ENCODE measurements at regions of chr17 and their contacts with region 1.

Region 1: DNA sequence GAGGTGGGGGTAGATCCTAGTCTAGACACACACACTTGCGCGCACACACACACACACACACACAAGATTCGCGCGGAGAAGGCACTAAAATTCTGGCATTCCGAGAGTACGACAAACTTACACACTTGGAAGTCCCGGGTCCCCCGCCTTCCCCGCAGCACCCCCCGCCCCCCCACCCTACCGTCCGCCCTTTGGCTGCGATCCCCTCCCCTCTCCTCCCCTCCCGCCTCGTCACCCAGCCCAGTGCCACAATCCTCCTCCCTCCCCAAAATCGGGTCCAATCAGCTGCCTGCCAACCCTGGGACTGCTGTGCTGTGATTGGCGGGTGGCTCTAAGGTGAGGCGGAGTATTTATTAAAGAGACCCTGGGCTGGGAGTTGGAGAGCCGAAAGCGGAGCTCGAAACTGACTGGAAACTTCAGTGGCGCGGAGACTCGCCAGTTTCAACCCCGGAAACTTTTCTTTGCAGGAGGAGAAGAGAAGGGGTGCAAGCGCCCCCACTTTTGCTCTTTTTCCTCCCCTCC is at the start of gene SOX9:
- DNase-seq: peak; percentile 73
- ATAC-seq: peak; percentile 90
- H3K4me3 ChIP-seq: peak within 1 kb of the TSS; percentile 84
- H3K27ac ChIP-seq: no peak within 1 kb of the TSS; the same call in 1 of the 2 replicates
- H3K4me1 ChIP-seq: peaks cover 5% of the 10 kb centered on the region
- H3K27me3 ChIP-seq: peaks cover 9 to 17% of the 10 kb centered on the region in 2 experiments
- CTCF ChIP-seq: no peak
- EP300 ChIP-seq: no peak; a peak in 1 of 4 replicates
- POLR2A ChIP-seq: peak; percentile 63
- RAD21 ChIP-seq: 0 out of 2 replicates have a peak, but pooled peaks have one; percentile 11
- polyA plus RNA-seq, gene SOX9: 4.5 to 8.6 TPM

Region 2: GRCh38 chr17:71764505-71764904 is 356.2 kb before region 1 on chr17:
- CTCF ChIA-PET with region 1: no interaction called
- POLR2A ChIA-PET with region 1: no interaction called
- RAD21 ChIA-PET with region 1: no interaction called
- SMC1A ChIA-PET with region 1: no interaction called
- in situ Hi-C with region 1: no loop called
- intact Hi-C with region 1: loop called (anchors 5 kb)
- DNase-seq: no peak
- ATAC-seq: peak; percentile 98
- H3K4me3 ChIP-seq: no peak overlapping the region
- H3K27ac ChIP-seq: no peak overlapping the region
- H3K4me1 ChIP-seq: no peaks in the 10 kb centered on the region
- H3K27me3 ChIP-seq: no peaks in the 10 kb centered on the region
- CTCF ChIP-seq: peak; percentile 58 to 62 (median 58)
- EP300 ChIP-seq: no peak
- POLR2A ChIP-seq: no peak
- RAD21 ChIP-seq: peak; percentile 59

Region 3: GRCh38 chr17:71976011-71976649 is 144.6 kb before region 1 on chr17:
- CTCF ChIA-PET with region 1: no interaction called
- POLR2A ChIA-PET with region 1: no interaction called
- RAD21 ChIA-PET with region 1: no interaction called
- SMC1A ChIA-PET with region 1: no interaction called
- in situ Hi-C with region 1: no loop called
- intact Hi-C with region 1: no loop called
- DNase-seq: no peak
- ATAC-seq: no peak
- H3K4me3 ChIP-seq: no peak overlapping the region
- H3K27ac ChIP-seq: no peak overlapping the region
- H3K4me1 ChIP-seq: no peaks in the 10 kb centered on the region
- H3K27me3 ChIP-seq: no peaks in the 10 kb centered on the region
- CTCF ChIP-seq: no peak
- EP300 ChIP-seq: no peak
- POLR2A ChIP-seq: no peak
- RAD21 ChIP-seq: no peak

Region 4: GRCh38 chr17:72004611-72005331 is 115.9 kb before region 1 on chr17:
- CTCF ChIA-PET with region 1: interaction called, 9 read pairs
- POLR2A ChIA-PET with region 1: interaction called, 3 read pairs
- RAD21 ChIA-PET with region 1: interaction called, 42 read pairs
- SMC1A ChIA-PET with region 1: interaction called, 10 read pairs
- in situ Hi-C with region 1: no loop called
- intact Hi-C with region 1: loop called (anchors 1 kb)
- DNase-seq: peak; percentile 79
- ATAC-seq: peak; percentile 77
- H3K4me3 ChIP-seq: peak overlapping the region; percentile 35
- H3K27ac ChIP-seq: peak overlapping the region; percentile 87
- H3K4me1 ChIP-seq: peaks cover 7% of the 10 kb centered on the region; the same call in 1 of the 2 replicates
- H3K27me3 ChIP-seq: no peaks in the 10 kb centered on the region
- CTCF ChIP-seq: no peak
- EP300 ChIP-seq: peak in 1 of 2 experiments; percentile 11; a peak in 2 of 4 replicates
- POLR2A ChIP-seq: no peak
- RAD21 ChIP-seq: peak; percentile 10; the same call in 1 of the 2 replicates

Region 5: DNA sequence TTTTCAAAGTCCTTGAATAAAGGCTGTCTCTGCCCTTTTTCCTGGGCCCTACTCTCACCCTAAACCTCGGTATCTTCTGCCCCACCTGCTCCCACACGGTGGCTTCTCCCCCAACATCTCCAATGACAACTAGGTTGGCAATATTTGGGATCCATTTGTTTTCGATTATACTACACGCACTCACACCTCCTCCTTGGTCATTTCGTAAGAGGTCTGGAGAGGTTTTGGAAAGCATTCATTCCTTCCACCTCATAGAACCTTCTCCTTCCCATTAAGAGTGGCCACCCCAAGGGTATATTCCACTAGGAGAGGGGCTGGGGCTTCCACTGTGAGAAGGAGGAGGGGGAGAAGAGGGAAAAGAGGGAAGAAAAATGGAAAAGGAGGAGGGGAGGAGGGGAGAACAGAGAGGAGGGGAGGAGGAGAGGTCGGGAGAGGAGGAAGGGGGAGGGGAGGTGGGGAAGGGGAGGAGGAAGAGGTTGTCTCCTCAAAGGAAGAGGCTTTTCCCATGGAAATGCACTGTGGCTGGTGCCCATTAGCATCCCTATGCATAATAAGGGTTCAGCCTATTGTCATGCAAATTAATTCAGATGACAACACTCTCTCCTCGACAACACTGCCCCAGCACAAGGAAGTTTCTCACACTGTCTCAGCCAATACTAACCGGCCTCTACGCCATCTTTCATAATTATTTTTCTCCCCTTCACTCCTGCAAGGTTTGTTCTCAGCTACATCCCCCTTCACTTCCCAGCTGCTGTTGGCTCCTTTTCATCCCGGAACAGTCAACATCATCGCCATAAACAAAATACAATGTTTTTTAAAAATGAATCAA is 30.1 kb after region 1 on chr17:
- CTCF ChIA-PET with region 1: no interaction called
- POLR2A ChIA-PET with region 1: no interaction called
- RAD21 ChIA-PET with region 1: no interaction called
- SMC1A ChIA-PET with region 1: no interaction called
- in situ Hi-C with region 1: no loop called
- intact Hi-C with region 1: no loop called
- DNase-seq: no peak
- ATAC-seq: no peak
- H3K4me3 ChIP-seq: no peak overlapping the region
- H3K27ac ChIP-seq: no peak overlapping the region
- H3K4me1 ChIP-seq: no peaks in the 10 kb centered on the region
- H3K27me3 ChIP-seq: no peaks in the 10 kb centered on the region
- CTCF ChIP-seq: no peak
- EP300 ChIP-seq: no peak
- POLR2A ChIP-seq: no peak
- RAD21 ChIP-seq: no peak

Region 6: DNA sequence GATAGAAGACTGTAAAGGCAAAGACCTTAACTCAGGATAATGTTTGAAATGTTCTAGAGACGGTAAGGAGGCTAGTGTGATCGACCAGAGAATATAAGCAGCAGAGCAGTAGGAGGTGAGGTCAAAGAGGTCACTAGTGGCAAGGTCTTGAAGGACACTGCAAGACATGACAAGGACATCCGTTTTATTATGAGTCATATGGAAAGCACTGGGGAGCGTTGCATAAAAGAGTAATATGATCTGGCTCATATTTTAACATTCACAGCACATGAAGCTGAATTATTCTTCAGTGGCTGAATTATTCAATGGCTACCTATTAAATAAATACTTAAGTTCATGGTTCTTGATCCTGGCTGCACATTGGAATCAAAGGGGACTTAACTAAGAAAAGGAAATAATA is 123.8 kb after region 1 on chr17:
- CTCF ChIA-PET with region 1: no interaction called
- POLR2A ChIA-PET with region 1: no interaction called
- RAD21 ChIA-PET with region 1: no interaction called
- SMC1A ChIA-PET with region 1: no interaction called
- in situ Hi-C with region 1: no loop called
- intact Hi-C with region 1: no loop called
- DNase-seq: no peak
- ATAC-seq: no peak
- H3K4me3 ChIP-seq: no peak overlapping the region
- H3K27ac ChIP-seq: no peak overlapping the region
- H3K4me1 ChIP-seq: no peaks in the 10 kb centered on the region
- H3K27me3 ChIP-seq: no peaks in the 10 kb centered on the region
- CTCF ChIP-seq: no peak
- EP300 ChIP-seq: no peak
- POLR2A ChIP-seq: no peak
- RAD21 ChIP-seq: no peak

Region 7: DNA sequence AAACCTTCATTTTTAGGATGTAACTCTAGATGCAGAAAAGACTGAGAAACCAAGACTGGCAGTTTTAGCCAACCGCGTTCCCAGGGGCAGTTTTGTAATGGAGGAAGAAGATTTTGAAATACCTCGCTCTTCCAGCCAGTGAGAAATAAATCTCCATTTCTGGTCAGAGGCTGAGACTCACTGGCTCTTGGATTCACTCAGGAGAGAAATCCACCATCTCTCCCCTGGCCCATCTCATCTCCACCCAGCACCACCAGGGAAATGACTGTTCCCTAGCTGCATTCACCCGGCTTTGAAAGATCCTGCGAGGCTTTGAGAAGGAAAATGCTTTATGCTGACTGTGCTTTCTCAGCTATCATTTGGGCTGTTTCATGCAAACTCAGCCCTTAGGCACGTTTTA is 185.3 kb after region 1 on chr17:
- CTCF ChIA-PET with region 1: interaction called, 3 read pairs
- POLR2A ChIA-PET with region 1: interaction called, 3 read pairs
- RAD21 ChIA-PET with region 1: no interaction called
- SMC1A ChIA-PET with region 1: no interaction called
- in situ Hi-C with region 1: no loop called
- intact Hi-C with region 1: loop called (anchors 2 kb)
- DNase-seq: no peak
- ATAC-seq: no peak
- H3K4me3 ChIP-seq: no peak overlapping the region
- H3K27ac ChIP-seq: no peak overlapping the region
- H3K4me1 ChIP-seq: peaks cover 15% of the 10 kb centered on the region
- H3K27me3 ChIP-seq: no peaks in the 10 kb centered on the region
- CTCF ChIP-seq: no peak
- EP300 ChIP-seq: no peak
- POLR2A ChIP-seq: no peak
- RAD21 ChIP-seq: no peak

Region 8: DNA sequence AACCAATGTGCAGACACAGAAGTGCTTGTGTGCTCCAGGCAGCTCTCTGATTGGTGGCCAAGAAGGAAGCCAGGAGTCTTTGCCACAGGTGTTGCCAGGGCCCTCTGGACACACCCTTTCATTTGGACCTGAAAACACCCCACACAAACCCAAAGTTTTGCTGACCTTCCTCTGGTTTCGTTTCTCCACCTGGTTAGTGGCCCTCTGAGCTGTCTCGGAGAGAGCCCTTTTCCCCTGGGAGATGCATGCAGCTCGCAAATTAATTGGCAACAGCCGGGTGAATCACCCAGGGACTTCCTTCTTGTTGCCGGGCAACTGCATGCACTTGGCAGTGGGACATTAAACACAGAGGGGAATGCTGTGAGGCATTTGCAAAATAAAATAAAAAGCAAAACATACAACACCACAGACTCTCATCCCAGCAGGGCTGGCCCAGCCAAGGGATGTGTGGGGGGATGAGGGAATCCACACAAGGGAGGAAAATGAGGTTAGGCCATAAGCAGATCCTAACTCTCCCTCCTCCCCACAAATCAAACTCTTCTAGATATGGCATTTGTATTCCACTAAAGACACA is 286.7 kb after region 1 on chr17:
- CTCF ChIA-PET with region 1: interaction called, 4 read pairs
- POLR2A ChIA-PET with region 1: interaction called, 4 read pairs
- RAD21 ChIA-PET with region 1: interaction called, 3 read pairs
- SMC1A ChIA-PET with region 1: interaction called, 3 read pairs
- in situ Hi-C with region 1: no loop called
- intact Hi-C with region 1: loop called (anchors 5 kb)
- DNase-seq: no peak
- ATAC-seq: peak; percentile 91
- H3K4me3 ChIP-seq: no peak overlapping the region
- H3K27ac ChIP-seq: peak overlapping the region; percentile 13; the same call in 1 of the 2 replicates
- H3K4me1 ChIP-seq: peaks cover 13% of the 10 kb centered on the region
- H3K27me3 ChIP-seq: no peaks in the 10 kb centered on the region
- CTCF ChIP-seq: no peak
- EP300 ChIP-seq: peak; percentile 58 to 76; a peak in 3 of 4 replicates
- POLR2A ChIP-seq: no peak
- RAD21 ChIP-seq: no peak

Region 9: DNA sequence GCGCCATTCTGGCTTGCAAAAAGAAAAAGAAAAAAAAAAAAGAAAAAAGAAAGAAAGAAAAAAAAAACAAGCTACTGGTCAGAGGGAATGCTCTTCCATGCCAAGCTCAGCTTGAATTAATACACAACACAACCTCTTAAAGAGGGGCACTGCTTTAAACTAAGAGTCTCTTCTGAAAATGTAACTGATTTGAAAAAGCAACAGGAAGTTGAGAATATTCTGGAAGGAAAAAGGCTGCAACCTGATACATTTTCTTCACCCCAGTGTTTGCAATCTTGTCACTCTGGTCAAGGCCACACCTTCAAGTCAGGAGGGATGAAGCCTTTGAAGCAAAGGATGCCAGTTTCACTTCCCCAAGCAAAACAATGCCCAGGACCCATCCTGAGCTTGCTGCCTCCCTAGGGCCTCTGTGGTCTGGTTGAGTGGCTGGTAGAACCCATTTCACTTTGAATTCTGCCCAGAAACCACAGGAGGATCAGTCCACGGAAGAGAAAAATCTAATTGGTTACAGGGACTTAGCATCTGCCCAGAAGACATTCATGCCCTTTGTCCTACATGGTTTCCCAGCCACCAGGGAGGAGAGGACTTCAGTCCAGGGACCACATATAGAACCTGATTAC is 389.8 kb after region 1 on chr17:
- CTCF ChIA-PET with region 1: interaction called, 4 read pairs
- POLR2A ChIA-PET with region 1: interaction called, 5 read pairs
- RAD21 ChIA-PET with region 1: interaction called, 19 read pairs
- SMC1A ChIA-PET with region 1: interaction called, 14 read pairs
- in situ Hi-C with region 1: loop called (anchors 10 kb)
- intact Hi-C with region 1: loop called (anchors 5 kb)
- DNase-seq: peak; percentile 92
- ATAC-seq: peak; percentile 80
- H3K4me3 ChIP-seq: no peak overlapping the region
- H3K27ac ChIP-seq: no peak overlapping the region
- H3K4me1 ChIP-seq: peaks cover 15% of the 10 kb centered on the region
- H3K27me3 ChIP-seq: no peaks in the 10 kb centered on the region
- CTCF ChIP-seq: no peak
- EP300 ChIP-seq: peak in 1 of 2 experiments; percentile 69; a peak in 1 of 4 replicates
- POLR2A ChIP-seq: no peak
- RAD21 ChIP-seq: no peak